ENCODE measurements at regions of chr12 and their contacts with region 1.

Region 1: DNA sequence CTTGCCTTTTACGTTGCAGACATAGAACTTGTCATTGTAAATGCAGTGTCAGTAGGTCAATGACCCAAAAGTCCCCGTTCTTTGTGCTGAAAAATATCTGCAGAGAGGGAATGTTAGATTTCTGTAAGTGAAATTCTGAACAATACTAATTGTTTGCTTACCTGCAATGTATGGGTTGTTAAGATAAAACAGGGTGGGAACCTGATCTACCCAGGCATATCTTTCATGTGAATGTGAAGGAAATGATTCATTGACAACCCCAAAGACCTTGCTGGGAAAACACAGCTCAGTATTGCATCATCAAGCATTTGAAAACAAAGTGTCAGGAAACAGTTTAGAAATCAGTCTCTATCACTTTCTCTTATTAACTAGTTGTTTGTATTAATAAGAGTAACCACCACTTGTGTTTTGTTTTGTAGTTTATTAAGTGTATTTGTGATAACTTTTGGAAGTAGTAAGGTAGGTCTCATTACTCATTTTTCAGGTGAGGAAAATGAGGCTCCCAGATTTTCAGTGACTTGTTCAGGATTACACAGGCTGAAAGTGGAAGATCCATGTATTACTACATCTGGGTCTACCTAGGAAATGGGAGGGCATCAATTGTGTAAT is 57.9 kb upstream of the SLC38A2 start:
- DNase-seq: peak; percentile 64
- H3K4me3 Mint-ChIP-seq: peak overlapping the region; percentile 53
- H3K27ac Mint-ChIP-seq: peak overlapping the region; percentile 82
- H3K4me1 Mint-ChIP-seq: peaks cover 30% of the 10 kb centered on the region
- H3K27me3 Mint-ChIP-seq: no peaks in the 10 kb centered on the region

Region 2: DNA sequence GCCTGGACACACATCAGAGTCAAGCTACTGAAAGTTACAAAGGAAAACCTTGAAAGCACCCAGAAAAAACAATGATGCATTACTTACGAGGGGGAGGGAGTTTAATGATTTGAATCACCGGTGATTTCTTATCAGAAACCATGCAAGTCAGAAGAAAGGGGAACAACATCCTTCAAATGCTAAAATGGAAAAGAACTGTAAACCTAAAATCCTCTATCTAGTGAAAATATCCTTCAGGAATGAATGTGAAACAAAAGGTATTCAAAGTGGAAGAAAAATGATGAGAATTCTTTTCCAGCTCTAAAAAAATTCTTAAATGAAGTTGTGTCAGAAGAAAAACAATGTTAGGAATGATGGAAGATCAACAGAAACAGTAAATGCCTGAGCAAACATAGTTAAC is 456.9 kb before region 1 on chr12:
- CTCF ChIA-PET with region 1: no interaction called
- intact Hi-C with region 1: no loop called
- DNase-seq: no peak
- H3K4me3 Mint-ChIP-seq: no peak overlapping the region
- H3K27ac Mint-ChIP-seq: no peak overlapping the region
- H3K4me1 Mint-ChIP-seq: peaks cover 57% of the 10 kb centered on the region
- H3K27me3 Mint-ChIP-seq: no peaks in the 10 kb centered on the region

Region 3: GRCh38 chr12:46382964-46383653 is 47.3 kb before region 1 on chr12:
- CTCF ChIA-PET with region 1: interaction called, 3 read pairs
- intact Hi-C with region 1: loop called (anchors 1 kb)
- DNase-seq: peak; percentile 96
- H3K4me3 Mint-ChIP-seq: peak overlapping the region; percentile 77
- H3K27ac Mint-ChIP-seq: peak overlapping the region; percentile 87
- H3K4me1 Mint-ChIP-seq: peaks cover 38% of the 10 kb centered on the region
- H3K27me3 Mint-ChIP-seq: no peaks in the 10 kb centered on the region

Region 4: DNA sequence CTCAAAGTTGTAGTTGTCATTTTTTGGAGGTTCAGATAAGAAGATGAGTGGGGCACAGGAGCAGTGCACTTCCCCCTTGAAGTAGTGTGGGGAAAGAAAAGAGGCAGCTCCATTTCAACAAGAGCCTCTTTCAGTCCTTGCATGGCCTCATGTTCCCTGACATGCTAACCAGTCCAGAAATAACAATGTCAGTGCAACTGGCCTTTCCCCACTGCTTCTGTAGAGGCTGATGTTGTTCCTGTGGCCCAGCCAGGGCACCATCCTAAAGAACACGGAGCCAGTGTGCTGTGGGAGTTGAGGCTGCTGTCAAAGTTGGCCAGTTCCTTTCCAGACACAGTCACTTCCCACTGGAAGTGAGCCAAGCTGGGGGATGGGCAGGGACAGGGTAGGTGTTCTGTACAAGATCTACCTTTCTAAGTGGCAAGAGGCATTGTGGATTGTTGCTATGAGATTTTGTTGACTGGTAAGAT is 19.9 kb after region 1 on chr12:
- CTCF ChIA-PET with region 1: interaction called, 6 read pairs
- intact Hi-C with region 1: loop called (anchors 2 kb)
- DNase-seq: peak; percentile 34
- H3K4me3 Mint-ChIP-seq: no peak overlapping the region
- H3K27ac Mint-ChIP-seq: peak overlapping the region; percentile 47
- H3K4me1 Mint-ChIP-seq: peaks cover 49% of the 10 kb centered on the region
- H3K27me3 Mint-ChIP-seq: no peaks in the 10 kb centered on the region

Region 5: DNA sequence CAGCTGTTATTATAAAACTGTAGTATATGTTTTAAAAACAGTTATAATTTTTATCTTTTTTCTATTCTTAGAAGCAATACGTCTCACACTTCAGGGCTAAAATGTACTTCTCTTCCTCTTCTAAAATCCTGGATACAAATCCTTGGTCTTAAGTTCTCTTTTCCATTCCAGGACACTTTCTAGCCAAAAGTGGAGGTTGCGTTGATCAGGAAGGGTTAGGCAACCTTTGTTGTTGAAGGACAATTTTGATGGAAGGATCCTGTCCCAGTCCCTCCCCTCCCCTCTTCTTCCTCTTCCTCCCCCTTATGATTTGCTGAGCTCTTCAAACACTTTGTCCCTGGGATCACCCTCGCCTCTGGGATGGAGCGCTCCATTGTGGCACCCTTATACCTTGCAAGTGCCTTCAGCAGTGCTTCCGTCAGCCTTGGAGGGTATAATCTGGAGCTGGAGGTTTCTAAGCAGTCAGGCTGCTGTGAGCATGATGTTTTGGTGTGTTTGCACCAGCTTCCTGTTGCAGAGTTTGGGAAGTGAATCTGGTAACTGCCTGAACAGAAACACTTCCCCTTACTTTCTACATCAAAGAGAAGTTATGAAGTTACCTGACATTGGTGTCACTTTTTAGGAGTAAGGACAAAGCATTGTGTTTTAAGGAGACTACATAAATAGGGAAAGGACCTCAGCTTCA is 29.6 kb after region 1 on chr12:
- CTCF ChIA-PET with region 1: interaction called, 6 read pairs
- intact Hi-C with region 1: loop called (anchors 1 kb)
- DNase-seq: peak; percentile 48
- H3K4me3 Mint-ChIP-seq: peak overlapping the region; percentile 71
- H3K27ac Mint-ChIP-seq: peak overlapping the region; percentile 91
- H3K4me1 Mint-ChIP-seq: peaks cover 64% of the 10 kb centered on the region
- H3K27me3 Mint-ChIP-seq: no peaks in the 10 kb centered on the region

Region 6: DNA sequence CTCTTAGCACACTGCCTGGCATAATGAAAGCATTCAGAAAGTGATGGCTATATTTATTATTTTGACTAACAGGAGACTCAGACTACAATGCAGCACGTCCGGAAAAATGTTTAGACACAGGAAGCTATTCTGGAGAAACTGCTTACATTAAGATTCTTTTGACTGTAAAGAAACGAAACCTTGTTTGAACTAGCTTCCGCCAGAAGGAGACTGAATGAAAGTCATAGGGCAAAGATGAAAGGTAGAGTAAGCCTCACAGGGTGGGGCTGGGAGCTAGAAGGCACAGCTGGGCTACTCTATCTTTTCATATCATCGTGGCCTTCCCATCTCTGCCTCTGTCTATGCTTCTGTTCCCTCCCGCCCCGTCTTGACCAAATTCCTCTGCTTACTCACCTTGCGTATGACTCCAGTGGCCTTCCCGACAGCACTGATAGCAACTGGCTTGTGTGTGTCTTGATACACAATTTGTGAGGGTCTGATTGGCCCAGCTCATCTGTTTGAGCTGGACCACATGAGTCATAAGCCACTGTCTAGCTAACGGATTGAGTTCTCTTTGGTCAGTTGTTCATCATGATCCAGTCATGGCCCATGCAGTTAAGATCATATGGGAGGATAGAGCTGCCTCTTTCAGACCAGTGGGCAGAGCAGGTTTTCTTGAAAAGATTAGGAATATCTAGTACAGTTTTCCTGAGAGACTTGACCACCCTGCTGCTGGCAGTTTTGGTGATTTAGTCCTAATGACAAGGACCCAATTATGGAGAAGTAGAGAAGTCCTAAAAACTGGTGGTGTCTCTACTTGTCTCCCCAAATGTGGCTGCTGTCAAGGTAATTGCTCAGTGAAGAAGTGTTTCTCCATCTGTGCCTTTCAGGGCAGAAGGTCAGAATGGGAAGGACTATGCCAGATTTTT is 93.7 kb after region 1 on chr12:
- CTCF ChIA-PET with region 1: interaction called, 4 read pairs
- intact Hi-C with region 1: loop called (anchors 1 kb)
- DNase-seq: peak; percentile 76
- H3K4me3 Mint-ChIP-seq: peak overlapping the region; percentile 61
- H3K27ac Mint-ChIP-seq: peak overlapping the region; percentile 81
- H3K4me1 Mint-ChIP-seq: peaks cover 38% of the 10 kb centered on the region
- H3K27me3 Mint-ChIP-seq: no peaks in the 10 kb centered on the region

Region 7: DNA sequence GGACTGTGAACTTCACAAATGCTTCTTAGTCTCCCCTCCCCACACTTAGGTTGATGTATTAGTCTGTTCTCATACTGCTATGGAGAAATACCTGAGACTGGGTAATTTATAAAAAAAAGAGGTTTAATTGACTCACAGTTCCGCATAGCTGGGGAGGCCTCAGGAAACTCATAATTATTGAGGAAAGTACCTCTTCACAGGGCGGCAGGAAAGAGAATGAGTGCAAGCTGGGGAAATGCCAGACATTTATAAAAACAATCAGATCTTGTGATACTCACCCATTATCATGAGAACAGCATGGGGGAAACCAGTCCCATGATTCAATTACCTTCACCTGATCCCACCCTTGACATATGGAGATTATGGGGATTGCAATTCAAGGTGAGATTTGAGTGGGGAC is 216.6 kb after region 1 on chr12:
- CTCF ChIA-PET with region 1: no interaction called
- intact Hi-C with region 1: loop called (anchors 1 kb)
- DNase-seq: peak; percentile 53
- H3K4me3 Mint-ChIP-seq: no peak overlapping the region
- H3K27ac Mint-ChIP-seq: peak overlapping the region; percentile 74
- H3K4me1 Mint-ChIP-seq: peaks cover 9% of the 10 kb centered on the region
- H3K27me3 Mint-ChIP-seq: no peaks in the 10 kb centered on the region

Measured in activated naive CD4-positive, alpha-beta T cell treated with anti-CD3 and anti-CD28 coated beads for 36 hours (primary cell).